ENCODE measurements at regions of chr13 and their contacts with region 1.

Region 1: DNA sequence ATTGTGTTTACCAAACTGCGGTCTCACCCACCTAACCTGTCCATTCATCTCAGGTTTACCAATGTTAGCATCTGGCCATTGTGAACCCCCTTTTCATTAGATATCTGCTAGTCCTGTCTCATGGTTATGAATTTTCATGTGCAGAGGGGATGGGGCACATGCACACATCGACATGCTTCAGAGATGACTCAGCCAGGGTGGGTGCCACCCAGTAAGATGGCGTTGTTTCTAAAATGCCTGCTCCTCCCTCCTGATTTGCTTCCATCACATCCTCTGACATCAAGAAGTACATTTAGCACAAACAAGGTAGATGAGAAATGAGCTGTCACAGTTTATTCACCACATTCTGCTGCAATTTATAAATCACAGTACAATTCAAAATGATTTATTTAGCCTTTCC is 51.3 kb downstream of the GPALPP1 start:
- DNase-seq: peak; percentile 30
- ATAC-seq: peak; percentile 69
- H3K4me3 Mint-ChIP-seq: no peak overlapping the region
- H3K27ac Mint-ChIP-seq: no peak overlapping the region
- H3K4me1 Mint-ChIP-seq: peaks cover 3% of the 10 kb centered on the region
- H3K27me3 Mint-ChIP-seq: peaks cover 5% of the 10 kb centered on the region

Region 2: DNA sequence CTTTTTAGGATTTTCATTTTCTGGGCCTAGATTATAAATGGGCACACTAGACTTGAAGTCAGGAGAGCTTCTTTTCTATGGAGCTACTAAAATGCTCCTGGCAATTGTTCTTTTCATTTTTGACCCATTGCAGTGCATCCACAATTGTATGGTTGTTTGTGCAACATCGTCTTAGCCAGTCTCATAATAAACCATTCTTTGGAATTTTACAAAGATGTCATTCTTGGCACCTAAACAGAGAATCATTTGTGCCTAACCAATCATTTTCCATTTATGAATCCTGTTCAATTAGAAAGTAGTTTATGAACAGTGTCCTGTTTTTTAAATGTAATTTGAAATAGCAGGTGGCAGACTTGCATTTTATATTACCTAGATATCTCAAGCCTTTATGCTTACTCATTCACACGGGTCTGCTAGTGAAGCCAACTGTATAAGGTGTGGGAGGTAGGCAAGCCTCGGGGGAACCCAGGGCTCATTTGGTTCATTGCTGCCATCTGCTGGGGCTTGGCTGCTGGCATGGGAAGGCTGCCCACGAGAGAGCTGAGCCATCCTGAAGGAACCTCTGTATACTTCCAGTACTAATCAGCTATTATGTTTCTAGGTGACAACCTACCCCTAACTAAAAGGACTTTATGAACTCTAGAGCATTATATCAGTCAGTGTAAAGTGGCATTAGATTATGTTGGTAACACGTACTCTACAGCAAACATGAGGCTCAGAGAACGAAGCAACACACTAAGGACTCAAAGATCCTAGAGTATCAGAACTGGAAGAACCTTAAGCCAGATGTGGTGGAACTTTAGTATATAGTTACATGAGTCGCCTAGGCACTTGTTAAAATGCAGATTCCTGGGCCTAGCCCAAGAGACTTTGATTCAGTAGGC is 240.4 kb after region 1 on chr13:
- CTCF ChIA-PET with region 1: interaction called, 78 read pairs
- POLR2A ChIA-PET with region 1: no interaction called
- intact Hi-C with region 1: no loop called
- DNase-seq: peak; percentile 81
- ATAC-seq: peak; percentile 100
- H3K4me3 Mint-ChIP-seq: no peak overlapping the region
- H3K27ac Mint-ChIP-seq: no peak overlapping the region
- H3K4me1 Mint-ChIP-seq: peaks cover 7% of the 10 kb centered on the region
- H3K27me3 Mint-ChIP-seq: no peaks in the 10 kb centered on the region